Naive thymus-derived CD4-positive, alpha-beta T cell (primary cell): ENCODE measurements at regions of chr2 and their contacts with region 1.

Region 1: DNA sequence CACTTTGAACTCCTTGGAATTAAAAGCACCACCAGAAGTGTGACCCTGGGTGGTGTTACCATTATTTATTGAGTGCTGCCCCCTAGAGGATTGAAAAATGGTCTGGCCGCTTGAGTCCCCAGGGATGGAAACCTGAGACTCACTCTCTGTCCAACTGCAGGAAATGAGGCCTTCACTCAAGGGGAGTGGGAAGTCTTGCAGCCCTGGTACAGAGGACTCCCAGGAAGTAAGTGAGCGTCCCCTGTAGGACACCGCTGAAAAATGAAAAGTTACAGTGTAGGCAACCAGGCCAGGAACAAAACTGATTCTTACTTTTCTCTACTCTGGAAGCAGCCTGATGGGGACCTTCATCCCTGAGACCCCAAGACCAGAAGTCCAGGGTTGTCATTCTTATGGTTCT is 2.2 kb upstream of the NRP2 start:
- DNase-seq: peak in 7 of 9 donors; percentile 16 to 56 (median 39)
- ATAC-seq: peak; percentile 40
- H3K4me3 ChIP-seq: no peak overlapping the region
- H3K4me3 Mint-ChIP-seq: peak overlapping the region in 6 of 10 donors; percentile 2 to 68 (median 29)
- H3K27ac ChIP-seq: no peak overlapping the region
- H3K27ac Mint-ChIP-seq: peak overlapping the region in 1 of 9 donors; percentile 9
- H3K4me1 ChIP-seq: peaks cover 0 to 4% of the 10 kb centered on the region in 2 donors
- H3K4me1 Mint-ChIP-seq: peaks cover 16 to 43% (median 24%) of the 10 kb centered on the region in 7 donors
- H3K27me3 ChIP-seq: peaks cover 3 to 8% of the 10 kb centered on the region in 2 donors
- H3K27me3 Mint-ChIP-seq: peaks cover 40 to 55% (median 44%) of the 10 kb centered on the region in 5 donors

Region 2: DNA sequence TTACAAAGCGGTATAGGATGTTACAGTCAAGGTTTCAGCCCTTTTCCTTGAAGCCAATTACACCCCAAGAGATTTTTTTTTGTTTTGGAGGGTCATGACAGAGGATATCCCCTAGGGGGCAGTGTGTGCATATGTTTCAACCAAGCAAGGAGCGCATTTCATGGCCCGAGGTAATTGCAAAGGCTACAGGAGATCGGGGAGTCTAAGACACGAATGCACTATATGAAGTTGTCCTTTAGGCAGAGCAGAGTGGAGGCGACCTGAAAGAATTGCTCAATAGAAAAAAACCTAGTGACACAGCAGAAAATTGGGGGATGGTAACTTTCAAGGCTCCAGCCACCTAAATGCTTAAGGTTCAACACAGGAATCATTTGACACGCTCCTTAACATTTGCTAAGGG is 1354.6 kb before region 1 on chr2:
- CTCF ChIA-PET with region 1: interaction called, 10 read pairs
- POLR2A ChIA-PET with region 1: no interaction called
- intact Hi-C with region 1: loop called (anchors 1 to 2 kb)
- DNase-seq: peak; percentile 18 to 80 (median 71)
- ATAC-seq: peak; percentile 83
- H3K4me3 ChIP-seq: no peak overlapping the region
- H3K4me3 Mint-ChIP-seq: peak overlapping the region in 1 of 10 donors; percentile 36
- H3K27ac ChIP-seq: no peak overlapping the region
- H3K27ac Mint-ChIP-seq: peak overlapping the region in 1 of 9 donors; percentile 15
- H3K4me1 ChIP-seq: no peaks in the 10 kb centered on the region
- H3K4me1 Mint-ChIP-seq: peaks cover 0 to 14% (median 4%) of the 10 kb centered on the region in 7 donors
- H3K27me3 ChIP-seq: no peaks in the 10 kb centered on the region
- H3K27me3 Mint-ChIP-seq: peaks cover 5 to 12% (median 7%) of the 10 kb centered on the region in 5 donors

Region 3: DNA sequence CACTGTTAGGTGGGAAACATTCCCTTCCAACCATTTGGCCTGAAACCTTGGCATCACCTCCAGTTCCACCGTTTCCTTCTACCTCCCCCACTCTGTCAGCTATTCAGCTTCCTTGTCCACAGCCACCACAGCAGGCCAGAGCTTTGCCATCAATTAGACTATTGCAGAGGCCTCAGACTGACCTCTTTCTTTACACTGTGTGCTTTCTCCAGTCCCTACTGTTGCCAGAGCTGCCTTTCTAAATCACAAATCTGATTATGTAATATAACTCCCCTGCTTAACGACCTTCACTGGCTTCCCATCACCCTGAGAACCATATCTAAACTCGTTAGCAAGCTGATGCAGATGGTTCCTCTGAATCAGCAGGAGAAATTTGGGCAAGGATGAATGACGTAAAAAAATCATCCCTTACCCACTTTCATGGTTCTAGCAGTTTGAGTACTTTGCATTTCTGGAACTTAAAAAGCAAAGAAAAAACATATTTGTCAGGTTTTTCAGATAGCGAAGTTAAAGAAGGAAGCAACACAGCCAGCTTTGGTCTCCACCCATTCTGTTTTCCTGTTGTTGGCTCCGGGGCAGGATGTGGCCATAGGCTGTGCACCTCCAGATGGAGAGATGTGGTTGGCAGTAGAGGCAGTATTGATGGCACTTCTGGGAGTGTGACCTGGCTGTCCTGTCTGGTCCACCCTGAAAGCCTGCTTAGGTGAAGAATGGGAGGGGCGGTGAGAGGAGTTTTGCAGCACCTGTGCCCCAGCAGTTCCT is 712.7 kb before region 1 on chr2:
- CTCF ChIA-PET with region 1: no interaction called
- POLR2A ChIA-PET with region 1: no interaction called
- intact Hi-C with region 1: loop called in 1 of 2 experiments (anchors 5 kb)
- DNase-seq: peak; percentile 10 to 86 (median 83)
- ATAC-seq: peak; percentile 78
- H3K4me3 ChIP-seq: peak overlapping the region; percentile 37
- H3K4me3 Mint-ChIP-seq: peak overlapping the region; percentile 51 to 89 (median 70)
- H3K27ac ChIP-seq: peak overlapping the region; percentile 58
- H3K27ac Mint-ChIP-seq: peak overlapping the region; percentile 91 to 100 (median 98)
- H3K4me1 ChIP-seq: peaks cover 26 to 67% of the 10 kb centered on the region in 2 donors
- H3K4me1 Mint-ChIP-seq: peaks cover 36 to 80% (median 70%) of the 10 kb centered on the region in 7 donors
- H3K27me3 ChIP-seq: no peaks in the 10 kb centered on the region
- H3K27me3 Mint-ChIP-seq: no peaks in the 10 kb centered on the region

Region 4: GRCh38 chr2:205133544-205133943 is 546.5 kb before region 1 on chr2:
- CTCF ChIA-PET with region 1: interaction called, 4 read pairs
- POLR2A ChIA-PET with region 1: no interaction called
- intact Hi-C with region 1: loop called in 1 of 2 experiments (anchors 5 kb)
- DNase-seq: no peak
- ATAC-seq: no peak
- H3K4me3 ChIP-seq: no peak overlapping the region
- H3K4me3 Mint-ChIP-seq: no peak overlapping the region
- H3K27ac ChIP-seq: no peak overlapping the region
- H3K27ac Mint-ChIP-seq: no peak overlapping the region
- H3K4me1 ChIP-seq: peaks cover 0 to 16% of the 10 kb centered on the region in 2 donors
- H3K4me1 Mint-ChIP-seq: peaks cover 13 to 31% (median 23%) of the 10 kb centered on the region in 7 donors
- H3K27me3 ChIP-seq: no peaks in the 10 kb centered on the region
- H3K27me3 Mint-ChIP-seq: no peaks in the 10 kb centered on the region

Region 5: GRCh38 chr2:205596581-205596980 is 83.5 kb before region 1 on chr2:
- CTCF ChIA-PET with region 1: no interaction called
- POLR2A ChIA-PET with region 1: no interaction called
- intact Hi-C with region 1: loop called in 1 of 2 experiments (anchors 5 kb)
- DNase-seq: no peak
- ATAC-seq: no peak
- H3K4me3 ChIP-seq: no peak overlapping the region
- H3K4me3 Mint-ChIP-seq: no peak overlapping the region
- H3K27ac ChIP-seq: no peak overlapping the region
- H3K27ac Mint-ChIP-seq: no peak overlapping the region
- H3K4me1 ChIP-seq: no peaks in the 10 kb centered on the region
- H3K4me1 Mint-ChIP-seq: no peaks in the 10 kb centered on the region
- H3K27me3 ChIP-seq: no peaks in the 10 kb centered on the region
- H3K27me3 Mint-ChIP-seq: peaks cover 0 to 21% (median under 1%) of the 10 kb centered on the region in 5 donors

Region 6: DNA sequence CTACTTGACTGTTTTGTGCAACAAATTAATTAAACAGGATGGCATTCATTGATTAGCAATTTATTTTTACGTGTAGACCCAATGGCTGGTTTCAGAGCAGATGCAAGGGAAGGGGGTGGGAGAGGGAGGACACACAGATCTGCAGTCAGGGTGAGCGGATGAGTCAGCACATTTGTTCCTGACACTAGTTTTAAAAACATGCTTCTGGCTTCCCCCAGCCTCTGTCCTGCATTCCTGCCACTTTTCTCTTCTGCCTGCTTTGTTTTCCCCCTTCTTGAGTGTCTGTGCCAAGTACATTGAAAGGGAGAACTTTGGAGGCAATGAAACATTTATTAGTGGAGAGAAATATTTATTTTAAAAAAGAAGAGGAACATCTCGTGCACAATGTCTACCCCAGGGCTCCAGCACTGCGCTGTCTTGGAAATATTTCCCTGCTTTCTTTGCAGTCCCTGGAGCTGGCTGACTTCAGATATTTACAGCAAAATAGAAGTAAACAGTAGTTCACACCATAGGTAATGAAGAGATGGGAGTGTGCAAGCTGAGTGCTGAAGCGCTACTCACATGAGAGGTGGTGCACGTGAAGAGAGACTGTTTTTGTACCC is 54.5 kb after region 1 on chr2:
- CTCF ChIA-PET with region 1: no interaction called
- POLR2A ChIA-PET with region 1: no interaction called
- intact Hi-C with region 1: no loop called
- DNase-seq: no peak
- ATAC-seq: no peak
- H3K4me3 ChIP-seq: no peak overlapping the region
- H3K4me3 Mint-ChIP-seq: no peak overlapping the region
- H3K27ac ChIP-seq: no peak overlapping the region
- H3K27ac Mint-ChIP-seq: no peak overlapping the region
- H3K4me1 ChIP-seq: no peaks in the 10 kb centered on the region
- H3K4me1 Mint-ChIP-seq: peaks cover 0 to 6% (median 0%) of the 10 kb centered on the region in 7 donors
- H3K27me3 ChIP-seq: no peaks in the 10 kb centered on the region
- H3K27me3 Mint-ChIP-seq: peaks cover 0 to 3% (median 0%) of the 10 kb centered on the region in 5 donors

Region 7: DNA sequence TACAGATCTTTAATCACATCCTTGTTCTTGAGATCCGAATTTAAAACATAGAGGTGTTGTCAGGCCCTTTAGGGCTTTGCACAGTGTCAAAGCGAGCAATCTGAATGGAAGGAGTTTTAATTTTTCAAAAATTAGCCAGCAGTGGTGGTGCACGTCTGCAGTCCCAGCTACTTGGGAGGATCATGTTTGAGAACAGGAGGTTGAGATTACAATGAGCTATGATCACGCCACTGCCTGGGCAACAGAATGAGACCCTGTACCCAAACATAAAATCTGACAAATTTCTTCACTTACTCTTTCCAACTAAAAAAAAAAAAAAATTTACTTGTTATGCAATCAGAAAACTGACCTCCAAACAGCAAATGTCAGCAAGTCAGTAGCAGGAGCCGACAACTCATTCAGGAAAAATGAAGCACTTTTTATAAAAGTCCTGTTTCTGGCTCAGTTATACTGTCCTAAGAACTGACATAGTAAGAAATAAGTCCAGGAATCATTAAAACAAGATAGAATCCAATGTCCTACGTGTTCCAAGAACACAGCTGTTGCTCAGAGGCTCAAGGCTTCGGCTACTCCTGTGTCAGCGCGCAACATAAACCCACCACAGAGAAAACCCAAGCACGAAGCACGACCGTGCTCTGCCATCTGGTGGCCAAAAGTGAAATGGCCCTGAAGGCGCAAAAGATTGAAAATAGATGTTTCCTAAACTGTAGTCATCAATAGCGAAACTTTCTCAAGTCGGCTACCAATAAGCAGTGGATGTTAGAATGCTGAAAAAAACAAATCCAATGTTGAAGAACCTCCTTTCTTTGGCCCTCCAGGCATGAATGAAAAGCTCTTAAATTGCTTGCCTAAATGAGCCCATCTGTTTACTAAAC is 267.8 kb after region 1 on chr2:
- CTCF ChIA-PET with region 1: no interaction called
- POLR2A ChIA-PET with region 1: no interaction called
- intact Hi-C with region 1: loop called in 1 of 2 experiments (anchors 5 kb)
- DNase-seq: peak in 8 of 9 donors; percentile 12 to 53 (median 28)
- ATAC-seq: peak; percentile 71
- H3K4me3 ChIP-seq: no peak overlapping the region
- H3K4me3 Mint-ChIP-seq: peak overlapping the region in 1 of 10 donors; percentile 13
- H3K27ac ChIP-seq: no peak overlapping the region
- H3K27ac Mint-ChIP-seq: no peak overlapping the region
- H3K4me1 ChIP-seq: no peaks in the 10 kb centered on the region
- H3K4me1 Mint-ChIP-seq: peaks cover 0 to 4% (median 3%) of the 10 kb centered on the region in 7 donors
- H3K27me3 ChIP-seq: no peaks in the 10 kb centered on the region
- H3K27me3 Mint-ChIP-seq: peaks cover 0 to 25% (median 9%) of the 10 kb centered on the region in 5 donors